GM18951 (cell line): ENCODE measurements at regions of chr11 and their contacts with region 1.

Region 1: DNA sequence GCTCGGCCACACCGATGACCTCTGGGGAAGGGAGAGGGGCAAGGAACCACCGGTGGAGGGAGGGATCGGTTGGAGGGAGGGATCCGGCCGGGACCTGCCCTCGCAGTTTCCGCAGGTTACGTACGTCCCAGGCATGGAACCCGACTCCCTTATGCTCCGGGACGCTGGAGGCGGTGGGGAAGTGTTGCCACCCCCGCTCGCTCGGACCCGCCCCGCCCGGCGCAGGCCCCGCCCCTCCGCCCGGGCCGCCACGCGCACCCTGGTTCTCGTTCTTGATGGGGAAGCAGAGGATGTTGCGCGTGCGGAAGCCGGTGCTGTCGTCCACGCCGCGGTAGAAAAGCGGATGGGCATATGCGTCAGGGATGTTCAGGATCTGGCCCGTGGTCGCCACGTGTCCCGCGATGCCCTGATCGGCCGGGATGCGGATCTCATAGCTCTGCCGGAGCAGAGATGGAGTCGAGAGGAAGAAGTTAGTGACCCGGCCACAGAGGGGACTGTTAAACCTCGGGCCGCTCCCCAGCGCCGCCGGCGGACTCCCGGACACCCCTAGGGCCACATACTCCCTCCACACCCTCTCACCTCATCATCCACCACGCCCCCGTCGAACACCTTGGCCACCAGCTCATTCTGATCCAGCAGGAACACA is 89.8 kb downstream of the PDE2A start:
- POLR2A ChIP-seq: no peak

Region 2: DNA sequence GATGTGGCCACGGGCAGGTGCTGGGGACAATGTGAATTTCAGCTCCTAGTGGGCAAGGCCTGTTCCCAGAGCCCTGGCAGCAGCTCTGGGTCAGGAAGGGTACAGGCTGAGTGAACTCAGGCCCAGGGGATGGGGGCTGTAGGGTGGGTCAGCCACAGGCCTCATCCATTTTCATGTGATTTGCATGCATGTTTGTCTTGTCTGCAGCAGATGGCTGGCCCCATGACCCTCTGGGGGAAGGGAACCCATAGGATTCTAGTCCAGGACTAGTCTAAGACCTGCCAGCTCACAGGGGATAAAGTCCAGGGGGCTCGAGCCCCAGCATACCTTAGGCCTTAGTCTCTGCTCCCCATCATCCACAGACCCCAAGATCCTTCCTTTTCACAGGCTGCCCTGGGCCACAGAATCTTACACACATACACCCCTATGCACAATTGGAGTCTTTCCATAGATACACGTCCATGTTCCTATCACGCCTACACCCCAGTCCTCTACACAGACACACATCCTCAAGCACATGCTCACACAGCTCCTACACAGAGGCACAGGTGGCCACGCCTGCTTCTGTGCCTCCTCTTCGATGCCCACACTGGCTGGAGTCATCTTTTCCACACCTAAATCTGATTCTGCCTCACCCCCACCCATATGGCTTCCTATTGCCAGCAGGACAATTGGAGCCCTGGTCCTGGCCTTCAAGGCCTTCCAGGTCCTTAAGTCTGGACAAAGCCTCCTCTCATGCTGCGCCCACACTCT is 64.1 kb after region 1 on chr11:
- in situ Hi-C with region 1: loop called (anchors 5 kb)
- POLR2A ChIP-seq: no peak